ENCODE measurements at regions of chr16 and their contacts with region 1.

Region 1: GRCh38 chr16:66588981-66589713 is 9.9 kb downstream of the CMTM2 start:
- DNase-seq: peak in 1 of 2 donors; percentile 80
- ATAC-seq: peak; percentile 80
- H3K4me3 ChIP-seq: no peak overlapping the region
- H3K27ac ChIP-seq: no peak overlapping the region
- H3K4me1 ChIP-seq: no peaks in the 10 kb centered on the region
- H3K27me3 ChIP-seq: no peaks in the 10 kb centered on the region

Region 2: DNA sequence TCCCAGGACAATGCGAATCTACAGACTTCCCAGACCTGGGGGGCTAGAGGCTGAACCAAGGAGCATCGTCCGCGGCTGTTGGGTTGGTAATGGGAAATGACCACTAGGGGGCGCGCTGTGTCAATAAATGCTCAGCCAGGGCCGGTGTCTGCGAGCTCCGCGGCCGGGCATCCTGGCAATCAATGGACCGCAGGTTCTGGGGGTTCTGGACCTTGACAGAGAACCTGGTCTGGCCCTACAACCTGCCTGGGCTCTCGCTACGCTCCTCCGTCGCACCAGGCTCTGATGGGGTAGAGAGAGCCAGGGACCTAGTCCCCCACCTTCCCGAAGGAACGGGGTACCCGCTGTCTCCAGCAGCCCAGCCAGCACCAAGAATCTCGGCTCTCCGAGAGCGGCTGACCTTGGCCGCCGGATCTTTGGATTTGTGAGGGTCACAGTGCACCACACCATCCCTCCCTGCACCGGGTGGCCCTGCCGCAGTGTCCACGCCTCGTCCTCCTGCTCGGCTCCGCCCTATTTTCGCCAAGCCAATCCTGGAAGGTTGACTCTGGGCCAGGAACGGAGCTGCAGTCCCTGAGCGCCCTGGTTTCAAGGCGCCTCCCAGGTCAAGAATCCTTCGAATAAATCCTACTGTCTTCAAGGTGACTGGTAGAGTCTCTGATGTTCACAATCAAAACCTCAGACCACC is 182.5 kb before region 1 on chr16:
- intact Hi-C with region 1: loop called in 1 of 2 experiments (anchors 5 kb)
- DNase-seq: peak; percentile 89 to 96
- ATAC-seq: peak; percentile 94
- H3K4me3 ChIP-seq: peak overlapping the region in 1 of 2 donors; percentile 45
- H3K27ac ChIP-seq: no peak overlapping the region
- H3K4me1 ChIP-seq: no peaks in the 10 kb centered on the region
- H3K27me3 ChIP-seq: no peaks in the 10 kb centered on the region